ENCODE measurements at regions of chr5 and their contacts with region 1.

Region 1: GRCh38 chr5:97009212-97009898 is 73.5 kb downstream of the LNPEP start:
- DNase-seq: no peak
- ATAC-seq: peak; percentile 36

Region 2: GRCh38 chr5:96743065-96743768 is 266.1 kb before region 1 on chr5:
- intact Hi-C with region 1: no loop called
- DNase-seq: no peak
- ATAC-seq: peak; percentile 36

Region 3: GRCh38 chr5:97162045-97162444 is 152.7 kb after region 1 on chr5:
- intact Hi-C with region 1: loop called (anchors 10 kb)
- DNase-seq: peak; percentile 64
- ATAC-seq: peak; percentile 68

Region 4: DNA sequence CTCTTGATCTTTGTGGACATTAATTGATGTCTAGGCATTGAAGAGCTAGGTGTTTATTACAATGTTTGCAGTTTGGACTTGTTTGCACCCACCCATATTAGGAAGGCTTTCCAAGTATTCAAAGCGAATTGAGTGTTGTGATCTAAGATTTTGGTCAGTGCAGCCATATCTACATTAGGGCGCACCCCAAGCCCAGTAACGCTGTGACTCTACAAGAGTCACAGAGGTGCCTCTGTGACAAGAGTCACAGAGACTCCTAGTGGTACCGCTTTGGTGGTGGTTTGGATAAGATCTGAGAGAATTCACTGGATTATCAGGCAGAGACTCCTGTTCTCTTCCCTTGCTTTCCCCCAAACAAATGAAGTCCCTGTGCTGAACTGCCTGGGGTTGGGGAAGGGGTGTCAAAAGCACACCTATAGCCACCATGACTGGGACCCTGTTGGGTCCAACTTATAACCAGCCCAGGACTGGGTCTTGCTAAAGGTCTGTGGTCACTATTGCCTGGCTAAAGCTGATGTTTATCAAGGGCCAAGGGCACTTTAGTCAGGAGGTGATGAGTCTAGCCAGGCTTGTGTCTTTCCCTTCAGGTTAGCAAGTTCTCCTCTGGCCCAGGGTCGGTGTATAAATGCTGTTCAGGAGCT is 287.8 kb after region 1 on chr5:
- intact Hi-C with region 1: no loop called
- DNase-seq: no peak
- ATAC-seq: peak; percentile 46